Brain microvascular endothelial cell (primary cell): ENCODE measurements at regions of chr16 and their contacts with region 1.

Region 1: DNA sequence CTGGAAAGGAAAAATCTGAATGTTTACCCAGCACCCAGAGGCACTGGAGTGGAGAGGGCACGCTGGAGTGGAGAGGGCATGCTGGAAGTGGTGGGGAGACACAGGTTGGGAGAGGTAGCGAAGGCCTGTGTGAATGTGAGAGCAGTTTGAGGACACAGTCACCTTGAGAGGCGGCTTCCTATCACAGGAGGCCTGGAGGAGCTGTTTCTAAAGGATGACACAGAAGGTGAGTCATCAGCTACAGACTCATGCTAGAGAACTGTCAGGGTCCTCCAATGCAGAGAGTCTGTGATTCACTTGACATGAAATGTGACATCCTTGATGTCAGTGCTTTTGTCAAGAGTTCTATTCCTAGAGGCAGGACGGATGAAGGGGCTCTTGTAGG is 13.8 kb downstream of the CTRL start:
- DNase-seq: peak; percentile 84
- H3K4me3 ChIP-seq: no peak overlapping the region
- H3K27ac ChIP-seq: no peak overlapping the region
- H3K27me3 ChIP-seq: no peaks in the 10 kb centered on the region
- CTCF ChIP-seq: no peak

Region 2: DNA sequence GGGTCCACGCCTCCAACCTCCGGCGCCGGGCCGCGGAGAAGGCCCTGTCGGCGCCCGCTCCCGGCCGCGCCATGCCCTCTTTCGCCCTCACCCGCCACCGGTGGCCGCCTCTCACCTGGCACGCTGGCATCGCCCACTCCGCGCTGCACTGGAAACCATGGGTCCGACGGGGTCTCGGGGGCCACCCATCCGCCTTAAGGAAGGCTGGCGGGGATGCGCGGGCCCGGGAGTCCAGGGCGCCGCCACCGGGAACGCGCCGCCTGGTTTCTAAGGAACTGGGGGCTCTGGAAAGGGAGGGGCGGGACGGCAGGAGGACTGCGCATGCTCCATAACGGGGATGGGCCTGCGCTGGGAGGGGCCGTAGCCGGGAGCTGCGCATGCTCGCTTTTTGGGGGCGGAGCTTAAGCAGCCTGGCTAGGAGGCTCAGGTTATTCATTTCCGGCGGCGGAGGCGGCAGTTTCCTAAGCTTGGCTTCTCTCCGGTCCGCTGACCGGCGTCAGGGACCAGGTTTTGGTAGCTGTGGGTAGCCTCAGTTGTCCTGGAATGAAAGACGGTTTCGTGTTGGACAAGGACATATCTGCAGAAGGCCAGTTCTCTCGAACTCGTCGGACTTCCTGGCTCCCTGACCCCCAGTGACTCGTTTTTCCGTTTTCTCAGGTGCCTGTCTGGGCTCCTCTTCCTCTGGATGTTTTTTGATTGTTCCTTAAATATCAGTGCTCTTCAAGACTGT is 198.6 kb before region 1 on chr16 and contains the start of gene GFOD2:
- in situ Hi-C with region 1: loop called (anchors 25 kb)
- DNase-seq: peak; percentile 91
- H3K4me3 ChIP-seq: peak within 1 kb of the TSS; percentile 87
- H3K27ac ChIP-seq: peak within 1 kb of the TSS; percentile 69
- H3K27me3 ChIP-seq: no peaks in the 10 kb centered on the region
- CTCF ChIP-seq: no peak

Region 3: GRCh38 chr16:67806428-67807147 is 111.3 kb before region 1 on chr16 and contains the starts of genes RANBP10 and TSNAXIP1:
- in situ Hi-C with region 1: loop called (anchors 25 kb)
- DNase-seq: peak; percentile 99
- H3K4me3 ChIP-seq: peak within 1 kb of the TSS; percentile 96
- H3K27ac ChIP-seq: peak within 1 kb of the TSS; percentile 49
- H3K27me3 ChIP-seq: no peaks in the 10 kb centered on the region
- CTCF ChIP-seq: no peak